ENCODE measurements at regions of chr19 and their contacts with region 1.

Region 1: DNA sequence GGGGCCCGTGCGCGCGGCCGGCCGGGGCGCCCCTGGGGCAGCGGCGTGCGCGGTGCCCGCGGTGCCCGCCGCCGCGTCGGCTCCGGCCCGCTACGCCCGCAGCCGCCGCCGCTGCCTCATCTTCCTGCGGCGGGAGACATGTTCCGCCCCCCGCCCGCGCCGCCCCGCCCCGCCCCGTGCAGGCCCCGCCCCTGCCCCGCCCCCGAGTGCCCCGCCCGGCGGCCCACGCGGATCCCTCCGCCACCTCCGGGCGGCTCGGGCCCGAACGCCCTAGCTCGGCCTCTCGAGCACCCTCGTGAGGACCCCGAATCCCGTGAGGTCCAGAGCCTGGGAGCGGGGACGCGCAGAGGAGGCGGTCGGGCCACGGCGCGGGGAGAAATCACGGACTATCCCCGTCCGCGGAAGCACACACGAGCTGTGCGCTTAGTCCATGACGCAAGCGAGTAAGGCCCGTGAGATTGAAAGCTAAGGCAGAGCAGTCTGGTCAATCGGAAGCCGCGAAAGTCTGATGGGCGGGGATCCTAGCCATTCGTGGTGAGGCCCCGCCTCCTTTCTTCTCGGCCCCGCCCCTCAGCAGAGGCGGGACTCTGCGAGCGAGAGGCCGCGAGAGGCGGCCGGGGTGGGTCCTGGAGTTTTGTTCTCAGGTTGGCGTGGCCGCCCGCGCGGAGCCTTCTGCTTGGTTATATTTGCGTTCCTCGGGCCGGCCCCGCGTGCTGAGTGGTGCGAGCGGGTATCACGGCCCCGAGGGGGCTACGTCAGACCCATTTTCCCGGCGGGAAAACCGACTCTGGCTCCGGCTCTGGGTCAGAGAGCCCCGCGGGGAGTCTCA is at the start of gene TCF3:
- DNase-seq: peak; percentile 100
- H3K4me3 ChIP-seq: peak within 1 kb of the TSS; percentile 94
- H3K27ac ChIP-seq: peak within 1 kb of the TSS; percentile 98
- H3K4me1 ChIP-seq: peaks cover 54% of the 10 kb centered on the region
- CTCF ChIP-seq: no peak
- total RNA-seq, gene TCF3: 413 and 518 TPM in 2 replicates

Region 2: DNA sequence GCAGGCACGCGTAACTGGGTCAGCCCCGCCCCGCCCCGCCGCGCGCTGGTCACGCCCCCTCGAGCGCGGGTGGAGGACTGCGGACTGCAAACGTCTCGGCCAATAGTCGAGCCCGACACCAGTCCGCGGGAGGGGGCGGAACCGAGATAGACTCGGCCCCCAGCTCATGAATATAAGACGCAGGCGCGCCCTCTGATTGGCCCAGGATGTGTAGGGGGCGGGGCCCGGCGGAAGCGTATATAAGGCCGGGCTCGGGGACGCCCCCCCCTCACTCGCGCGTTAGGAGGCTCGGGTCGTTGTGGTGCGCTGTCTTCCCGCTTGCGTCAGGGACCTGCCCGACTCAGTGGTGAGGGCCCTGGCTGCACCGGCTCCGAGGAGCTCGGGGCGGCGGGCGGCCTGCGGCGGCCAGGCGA is 383.6 kb before region 1 on chr19 and contains the start of gene CIRBP:
- CTCF ChIA-PET with region 1: no interaction called
- POLR2A ChIA-PET with region 1: no interaction called
- intact Hi-C with region 1: loop called (anchors 5 kb)
- DNase-seq: peak; percentile 99
- H3K4me3 ChIP-seq: peak within 1 kb of the TSS; percentile 82
- H3K27ac ChIP-seq: peak within 1 kb of the TSS; percentile 69
- H3K4me1 ChIP-seq: peaks cover 85% of the 10 kb centered on the region
- CTCF ChIP-seq: no peak
- total RNA-seq, gene CIRBP: 278 and 287 TPM in 2 replicates

Region 3: DNA sequence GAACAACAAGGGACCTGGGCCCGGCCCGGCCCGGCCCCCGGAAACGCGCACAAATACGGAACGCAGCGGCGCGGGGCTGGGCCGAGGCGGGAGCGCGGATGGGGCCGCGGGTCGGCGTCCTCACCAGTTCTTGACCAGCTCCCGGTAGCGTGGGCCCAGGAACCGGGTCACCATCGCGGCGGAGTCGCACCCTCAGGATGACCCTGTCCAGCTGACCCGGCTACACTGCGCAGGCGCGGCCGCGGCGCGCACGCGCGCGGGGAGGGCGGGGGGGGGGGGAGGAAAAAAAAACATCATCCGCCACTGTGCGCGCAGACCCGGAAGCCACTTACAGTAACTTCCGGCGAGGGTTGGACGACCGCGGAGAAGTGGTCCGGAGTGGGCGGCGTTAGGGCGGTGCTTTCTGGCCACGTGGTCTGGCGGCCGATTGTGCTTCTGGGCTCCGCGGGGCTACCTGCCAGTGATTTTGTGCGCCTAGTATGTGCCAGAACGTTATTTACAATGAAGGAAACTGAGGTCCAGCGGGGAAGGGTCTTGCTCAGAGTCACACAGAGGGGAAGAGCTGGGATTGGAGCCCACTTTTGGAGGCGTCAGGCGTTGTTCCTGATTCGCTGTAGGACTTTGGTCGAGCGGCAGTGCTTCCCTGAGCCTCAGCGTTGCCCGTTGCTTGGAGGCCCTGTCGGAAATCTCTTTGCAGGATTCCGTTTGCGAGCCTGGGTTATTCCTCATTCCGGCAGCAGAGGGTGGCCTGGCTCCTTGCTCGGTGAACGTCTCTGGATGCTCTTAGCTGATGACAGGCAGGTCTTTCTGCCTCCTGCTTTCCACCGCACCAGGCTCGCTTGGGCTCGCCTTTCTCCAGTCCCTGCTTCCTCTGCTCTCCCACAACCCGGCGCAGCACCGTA is 47.2 kb before region 1 on chr19 and contains the start of gene UQCR11:
- CTCF ChIA-PET with region 1: no interaction called
- POLR2A ChIA-PET with region 1: interaction called, 4 read pairs
- intact Hi-C with region 1: loop called (anchors 2 kb)
- DNase-seq: peak; percentile 97
- H3K4me3 ChIP-seq: peak within 1 kb of the TSS; percentile 100
- H3K27ac ChIP-seq: peak within 1 kb of the TSS; percentile 88
- H3K4me1 ChIP-seq: peaks cover 50% of the 10 kb centered on the region
- CTCF ChIP-seq: peak; percentile 73
- total RNA-seq, gene UQCR11: 85.3 and 86.2 TPM in 2 replicates

Region 4: GRCh38 chr19:1618157-1619093 is 34.3 kb before region 1 on chr19:
- CTCF ChIA-PET with region 1: no interaction called
- POLR2A ChIA-PET with region 1: no interaction called
- intact Hi-C with region 1: loop called (anchors 2 kb)
- DNase-seq: peak; percentile 64
- H3K4me3 ChIP-seq: no peak overlapping the region
- H3K27ac ChIP-seq: peak overlapping the region; percentile 58
- H3K4me1 ChIP-seq: peaks cover 68% of the 10 kb centered on the region
- CTCF ChIP-seq: peak; percentile 68

Region 5: DNA sequence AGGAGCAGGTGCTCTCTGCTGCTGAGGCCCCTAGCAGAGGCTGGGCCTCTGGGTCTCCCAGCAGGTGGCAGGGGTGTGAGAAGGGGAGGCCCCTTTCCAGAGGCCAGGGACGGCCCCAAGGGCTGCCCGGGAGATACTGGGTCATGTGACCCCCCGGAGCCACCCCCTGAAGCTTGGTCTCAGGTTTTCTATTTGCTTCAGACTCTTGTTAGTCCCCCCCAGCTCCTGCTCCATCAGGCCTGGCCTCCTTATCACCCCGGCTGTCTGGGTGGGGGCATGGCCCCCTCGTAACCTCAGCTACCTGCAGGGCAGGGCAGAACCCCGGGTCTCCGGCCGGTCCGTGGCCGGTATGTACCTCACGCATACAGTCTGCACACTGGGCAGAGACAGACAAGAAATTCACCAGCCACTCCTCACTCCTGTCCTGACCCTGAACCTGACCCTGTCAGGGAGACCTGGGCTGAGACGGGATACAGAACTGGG is 12.9 kb after region 1 on chr19:
- CTCF ChIA-PET with region 1: interaction called, 8 read pairs
- POLR2A ChIA-PET with region 1: interaction called, 7 read pairs
- intact Hi-C with region 1: loop called (anchors 1 kb)
- DNase-seq: peak; percentile 80
- H3K4me3 ChIP-seq: peak overlapping the region; percentile 33
- H3K27ac ChIP-seq: peak overlapping the region; percentile 98
- H3K4me1 ChIP-seq: peaks cover 77% of the 10 kb centered on the region
- CTCF ChIP-seq: peak; percentile 43; the same call in 1 of the 2 replicates

Region 6: GRCh38 chr19:1672038-1672768 is 19.5 kb after region 1 on chr19:
- CTCF ChIA-PET with region 1: interaction called, 3 read pairs
- POLR2A ChIA-PET with region 1: interaction called, 7 read pairs
- intact Hi-C with region 1: loop called (anchors 1 kb)
- DNase-seq: peak; percentile 83
- H3K4me3 ChIP-seq: peak overlapping the region; percentile 65
- H3K27ac ChIP-seq: peak overlapping the region; percentile 98
- H3K4me1 ChIP-seq: peaks cover 56% of the 10 kb centered on the region
- CTCF ChIP-seq: peak; percentile 91

Region 7: GRCh38 chr19:1700002-1700732 is 47.5 kb after region 1 on chr19:
- CTCF ChIA-PET with region 1: no interaction called
- POLR2A ChIA-PET with region 1: no interaction called
- intact Hi-C with region 1: no loop called
- DNase-seq: no peak
- H3K4me3 ChIP-seq: no peak overlapping the region
- H3K27ac ChIP-seq: no peak overlapping the region
- H3K4me1 ChIP-seq: no peaks in the 10 kb centered on the region
- CTCF ChIP-seq: no peak